ENCODE measurements at regions of chr1 and their contacts with region 1.

Region 1: GRCh38 chr1:180881806-180882509 is 30.7 kb upstream of the KIAA1614 start:
- DNase-seq: no peak
- ATAC-seq: peak; percentile 62
- H3K4me3 ChIP-seq: no peak overlapping the region
- H3K27ac ChIP-seq: no peak overlapping the region
- H3K4me1 ChIP-seq: no peaks in the 10 kb centered on the region
- H3K27me3 ChIP-seq: no peaks in the 10 kb centered on the region
- CTCF ChIP-seq: peak; percentile 49

Region 2: GRCh38 chr1:181166377-181167196 is 284.6 kb after region 1 on chr1:
- intact Hi-C with region 1: loop called (anchors 10 kb)
- DNase-seq: no peak
- ATAC-seq: peak; percentile 99
- H3K4me3 ChIP-seq: no peak overlapping the region
- H3K27ac ChIP-seq: no peak overlapping the region
- H3K4me1 ChIP-seq: peaks cover 7% of the 10 kb centered on the region
- H3K27me3 ChIP-seq: no peaks in the 10 kb centered on the region
- CTCF ChIP-seq: peak; percentile 92

Measured in upper lobe of right lung (tissue), 1 donor.